ENCODE measurements at regions of chr13 and their contacts with region 1.

Region 1: GRCh38 chr13:48334534-48335127 is 31.1 kb downstream of the RB1 start:
- DNase-seq: peak; percentile 63
- ATAC-seq: peak; percentile 33
- H3K4me3 ChIP-seq: no peak overlapping the region
- H3K4me3 Mint-ChIP-seq: no peak overlapping the region
- H3K27ac ChIP-seq: no peak overlapping the region
- H3K27ac Mint-ChIP-seq: no peak overlapping the region
- H3K4me1 ChIP-seq: no peaks in the 10 kb centered on the region
- H3K4me1 Mint-ChIP-seq: peaks cover 12% of the 10 kb centered on the region
- H3K27me3 ChIP-seq: no peaks in the 10 kb centered on the region
- H3K27me3 Mint-ChIP-seq: no peaks in the 10 kb centered on the region
- CTCF ChIP-seq: peak; percentile 82

Region 2: DNA sequence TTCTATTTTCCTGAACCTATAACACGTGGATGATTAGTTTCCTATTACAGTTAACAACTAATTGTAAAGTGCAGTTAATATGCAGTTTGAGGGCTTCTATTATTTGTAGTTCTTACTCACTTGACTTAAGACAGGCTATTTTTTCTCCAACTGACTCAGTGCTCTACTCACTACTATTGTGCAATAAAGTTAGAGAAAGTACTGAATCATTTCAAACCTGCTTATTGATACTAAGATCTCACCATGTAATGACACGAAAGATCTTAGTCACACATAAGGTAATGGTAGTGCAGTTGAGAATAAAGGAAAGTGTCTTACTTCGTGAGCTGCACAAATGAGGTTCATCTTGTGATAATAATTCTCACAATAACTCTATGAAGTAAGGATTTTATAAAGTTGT is 124.5 kb before region 1 on chr13:
- CTCF ChIA-PET with region 1: no interaction called
- POLR2A ChIA-PET with region 1: no interaction called
- intact Hi-C with region 1: no loop called
- DNase-seq: no peak
- ATAC-seq: no peak
- H3K4me3 ChIP-seq: no peak overlapping the region
- H3K4me3 Mint-ChIP-seq: no peak overlapping the region
- H3K27ac ChIP-seq: no peak overlapping the region
- H3K27ac Mint-ChIP-seq: no peak overlapping the region
- H3K4me1 ChIP-seq: no peaks in the 10 kb centered on the region
- H3K4me1 Mint-ChIP-seq: no peaks in the 10 kb centered on the region
- H3K27me3 ChIP-seq: no peaks in the 10 kb centered on the region
- H3K27me3 Mint-ChIP-seq: no peaks in the 10 kb centered on the region
- CTCF ChIP-seq: no peak

Region 3: GRCh38 chr13:48380581-48380980 is 46.0 kb after region 1 on chr13:
- CTCF ChIA-PET with region 1: interaction called, 3 read pairs
- POLR2A ChIA-PET with region 1: no interaction called
- intact Hi-C with region 1: loop called (anchors 10 kb)
- DNase-seq: no peak
- ATAC-seq: no peak
- H3K4me3 ChIP-seq: no peak overlapping the region
- H3K4me3 Mint-ChIP-seq: no peak overlapping the region
- H3K27ac ChIP-seq: no peak overlapping the region
- H3K27ac Mint-ChIP-seq: no peak overlapping the region
- H3K4me1 ChIP-seq: no peaks in the 10 kb centered on the region
- H3K4me1 Mint-ChIP-seq: peaks cover 7% of the 10 kb centered on the region
- H3K27me3 ChIP-seq: no peaks in the 10 kb centered on the region
- H3K27me3 Mint-ChIP-seq: no peaks in the 10 kb centered on the region
- CTCF ChIP-seq: no peak

Region 4: DNA sequence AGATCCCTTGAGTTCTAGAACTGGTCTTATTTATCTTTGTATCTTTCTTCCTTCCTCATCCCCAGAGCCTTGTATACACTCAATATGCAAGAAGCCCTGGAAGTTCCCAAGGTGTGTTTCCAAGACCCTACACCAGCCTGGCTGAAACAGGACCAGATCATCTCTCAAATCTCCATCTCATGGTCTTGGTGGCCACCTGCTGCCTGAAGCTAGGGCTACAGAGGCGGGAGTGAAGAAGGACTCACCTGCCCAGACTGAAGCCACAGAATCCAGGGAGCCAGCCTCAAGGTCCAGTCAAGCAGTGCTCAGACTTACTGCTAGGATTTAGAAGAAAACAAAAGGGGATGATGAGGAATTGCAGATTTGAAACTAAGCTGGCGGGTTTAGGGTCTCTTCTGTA is 313.0 kb after region 1 on chr13:
- CTCF ChIA-PET with region 1: no interaction called
- POLR2A ChIA-PET with region 1: no interaction called
- intact Hi-C with region 1: loop called (anchors 5 kb)
- DNase-seq: peak; percentile 23
- ATAC-seq: no peak
- H3K4me3 ChIP-seq: no peak overlapping the region
- H3K4me3 Mint-ChIP-seq: no peak overlapping the region
- H3K27ac ChIP-seq: no peak overlapping the region
- H3K27ac Mint-ChIP-seq: no peak overlapping the region
- H3K4me1 ChIP-seq: no peaks in the 10 kb centered on the region
- H3K4me1 Mint-ChIP-seq: no peaks in the 10 kb centered on the region
- H3K27me3 ChIP-seq: peaks cover 0 to 4% (median 0%) of the 10 kb centered on the region in 4 experiments
- H3K27me3 Mint-ChIP-seq: peaks cover 24% of the 10 kb centered on the region
- CTCF ChIP-seq: peak; percentile 37